ENCODE measurements at regions of chr5 and their contacts with region 1.

Region 1: DNA sequence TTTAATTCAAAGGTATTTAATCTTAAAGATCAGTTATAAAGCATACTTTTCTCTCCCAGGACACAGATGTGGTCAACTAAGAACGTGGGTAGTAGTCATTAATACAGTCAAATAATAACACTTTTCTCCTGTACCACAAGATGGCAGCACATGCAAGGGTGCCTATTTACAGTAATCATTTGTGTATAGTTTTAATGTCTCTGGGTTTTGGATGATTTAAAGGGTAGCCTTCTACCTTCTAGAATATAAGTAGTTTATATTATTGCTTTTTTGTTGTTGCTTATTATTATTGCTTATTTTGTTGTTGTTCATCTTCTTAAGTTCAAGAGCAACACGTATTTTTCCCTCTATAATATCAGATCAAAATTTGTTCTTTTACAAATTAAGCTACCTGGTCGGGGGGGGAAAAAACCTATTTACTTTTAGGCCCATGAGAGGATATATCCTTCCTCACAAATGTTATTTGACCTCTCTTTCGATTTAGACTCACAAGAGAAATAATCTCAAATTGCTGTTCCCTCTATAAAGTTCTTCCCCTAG is 59.6 kb upstream of the SLC27A6 start:
- DNase-seq: peak in 2 of 5 donors; percentile 32 to 34
- ATAC-seq: peak; percentile 51 to 82 (median 76)
- H3K4me3 ChIP-seq: no peak overlapping the region
- H3K27ac ChIP-seq: no peak overlapping the region
- H3K4me1 ChIP-seq: no peaks in the 10 kb centered on the region
- H3K27me3 ChIP-seq: no peaks in the 10 kb centered on the region
- CTCF ChIP-seq: peak; percentile 75 to 92 (median 84)
- POLR2A ChIP-seq: no peak

Region 2: DNA sequence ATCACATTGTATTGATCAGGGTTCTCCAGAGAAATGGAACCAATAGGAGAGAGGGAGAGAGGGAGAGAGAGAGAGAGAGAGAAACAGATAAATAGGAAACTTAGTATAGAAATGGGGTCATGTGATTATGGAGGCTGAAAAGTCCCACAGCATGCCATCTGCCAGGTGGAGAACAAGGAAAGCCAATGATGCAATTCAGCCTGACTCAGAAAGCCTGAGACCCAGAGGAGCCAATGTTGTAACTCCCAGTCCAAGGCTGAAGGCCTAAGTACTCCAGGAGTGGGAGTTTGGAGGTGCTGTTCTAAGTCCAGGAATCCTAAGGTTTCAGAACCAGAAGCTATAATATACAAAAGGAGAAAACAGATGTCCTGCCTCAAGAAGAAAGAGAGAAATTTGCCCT is 140.5 kb after region 1 on chr5:
- intact Hi-C with region 1: loop called in 2 of 10 experiments (anchors 10 kb)
- DNase-seq: no peak
- ATAC-seq: no peak
- H3K4me3 ChIP-seq: no peak overlapping the region
- H3K27ac ChIP-seq: no peak overlapping the region
- H3K4me1 ChIP-seq: peaks cover 0 to 8% (median 0%) of the 10 kb centered on the region in 12 donors
- H3K27me3 ChIP-seq: no peaks in the 10 kb centered on the region
- CTCF ChIP-seq: no peak
- POLR2A ChIP-seq: no peak

Region 3: DNA sequence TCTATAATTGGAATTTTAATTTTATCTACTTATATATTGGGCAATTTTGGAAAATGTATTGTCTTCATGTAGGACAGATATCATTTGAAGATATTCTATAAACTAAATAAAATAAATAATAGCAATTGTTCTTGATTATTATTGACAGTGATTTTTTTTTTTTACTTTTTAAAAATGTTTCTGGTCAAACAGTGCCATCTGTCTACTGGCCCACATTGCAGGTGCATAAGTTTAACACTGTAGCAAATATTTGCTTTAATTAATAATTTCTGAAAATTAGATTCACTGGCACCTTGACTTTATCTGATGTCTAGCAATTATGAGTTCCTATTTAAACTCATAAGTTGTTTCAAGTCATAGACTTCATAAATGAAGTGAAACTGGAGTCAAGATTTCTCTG is 147.8 kb after region 1 on chr5:
- intact Hi-C with region 1: loop called in 2 of 10 experiments (anchors 10 kb)
- DNase-seq: no peak
- ATAC-seq: no peak
- H3K4me3 ChIP-seq: no peak overlapping the region
- H3K27ac ChIP-seq: no peak overlapping the region
- H3K4me1 ChIP-seq: peaks cover 0 to 8% (median 0%) of the 10 kb centered on the region in 12 donors
- H3K27me3 ChIP-seq: no peaks in the 10 kb centered on the region
- CTCF ChIP-seq: peak in 5 of 12 donors; percentile 17 to 31 (median 22)
- POLR2A ChIP-seq: no peak

Region 4: GRCh38 chr5:129125810-129126209 is 220.2 kb after region 1 on chr5:
- intact Hi-C with region 1: loop called in 8 of 10 experiments (anchors 5 to 10 kb)
- DNase-seq: no peak
- ATAC-seq: no peak
- H3K4me3 ChIP-seq: peak overlapping the region in 1 of 12 donors; percentile 6
- H3K27ac ChIP-seq: peak overlapping the region in 4 of 12 donors; percentile 1 to 75 (median 24)
- H3K4me1 ChIP-seq: peaks cover 0 to 15% (median 0%) of the 10 kb centered on the region in 12 donors
- H3K27me3 ChIP-seq: no peaks in the 10 kb centered on the region
- CTCF ChIP-seq: peak in 1 of 12 donors; percentile 17
- POLR2A ChIP-seq: no peak

Region 5: GRCh38 chr5:129135633-129136032 is 230.0 kb after region 1 on chr5:
- intact Hi-C with region 1: loop called in 5 of 10 experiments (anchors 5 to 10 kb)
- DNase-seq: no peak
- ATAC-seq: no peak
- H3K4me3 ChIP-seq: no peak overlapping the region
- H3K27ac ChIP-seq: no peak overlapping the region
- H3K4me1 ChIP-seq: no peaks in the 10 kb centered on the region
- H3K27me3 ChIP-seq: no peaks in the 10 kb centered on the region
- CTCF ChIP-seq: peak in 3 of 12 donors; percentile 4 to 15 (median 10)
- POLR2A ChIP-seq: no peak

Region 6: GRCh38 chr5:129447968-129448367 is 542.3 kb after region 1 on chr5:
- intact Hi-C with region 1: no loop called
- DNase-seq: no peak
- ATAC-seq: peak in 1 of 4 donors; percentile 39
- H3K4me3 ChIP-seq: no peak overlapping the region
- H3K27ac ChIP-seq: no peak overlapping the region
- H3K4me1 ChIP-seq: no peaks in the 10 kb centered on the region
- H3K27me3 ChIP-seq: peaks cover 0 to 7% (median 0%) of the 10 kb centered on the region in 9 donors
- CTCF ChIP-seq: no peak
- POLR2A ChIP-seq: no peak

Measured in heart left ventricle (tissue), 16 donors.